OCI-LY7 (cell line): ENCODE measurements at regions of chr7 and their contacts with region 1.

Region 1: DNA sequence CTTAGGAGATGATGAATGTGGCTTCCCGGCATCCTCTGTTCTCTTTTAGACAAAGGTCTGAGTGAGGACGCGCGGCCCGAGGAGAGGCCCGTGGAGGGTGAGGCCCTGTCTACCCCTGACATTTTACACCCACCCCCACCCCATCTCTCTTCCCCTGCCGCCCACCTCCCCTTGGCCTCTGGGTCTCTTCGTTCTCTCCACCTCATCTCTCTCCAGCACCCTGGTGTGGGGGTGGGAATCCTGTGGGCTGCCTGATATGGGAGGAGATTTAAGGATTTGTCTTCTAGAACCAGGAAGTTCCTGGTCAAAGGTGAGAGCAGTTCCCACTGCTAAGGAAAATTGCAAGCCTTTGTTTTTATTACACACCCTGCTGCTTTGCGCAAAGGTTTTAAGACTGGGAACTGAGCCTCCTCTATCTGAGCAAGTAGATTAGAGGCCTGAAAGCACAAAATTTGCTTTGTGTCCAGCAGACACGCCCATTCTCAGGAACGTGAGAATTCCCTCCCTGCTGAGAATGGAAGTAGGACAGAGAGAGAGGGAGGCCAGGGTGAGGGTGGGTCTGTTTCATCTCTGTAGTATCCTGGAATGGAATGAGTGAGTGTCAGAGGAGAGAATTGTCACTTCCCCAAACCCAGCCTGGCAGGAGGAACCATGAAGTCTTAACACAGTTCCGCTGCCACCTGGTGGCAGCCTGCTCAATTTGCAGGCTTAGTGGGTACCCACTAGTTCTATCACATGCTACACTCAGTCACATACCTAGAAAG is 91.2 kb downstream of the GTF2IRD1 start:
- DNase-seq: peak; percentile 68
- H3K4me3 ChIP-seq: no peak overlapping the region
- H3K27ac ChIP-seq: no peak overlapping the region
- H3K4me1 ChIP-seq: no peaks in the 10 kb centered on the region
- CTCF ChIP-seq: peak; percentile 77

Region 2: DNA sequence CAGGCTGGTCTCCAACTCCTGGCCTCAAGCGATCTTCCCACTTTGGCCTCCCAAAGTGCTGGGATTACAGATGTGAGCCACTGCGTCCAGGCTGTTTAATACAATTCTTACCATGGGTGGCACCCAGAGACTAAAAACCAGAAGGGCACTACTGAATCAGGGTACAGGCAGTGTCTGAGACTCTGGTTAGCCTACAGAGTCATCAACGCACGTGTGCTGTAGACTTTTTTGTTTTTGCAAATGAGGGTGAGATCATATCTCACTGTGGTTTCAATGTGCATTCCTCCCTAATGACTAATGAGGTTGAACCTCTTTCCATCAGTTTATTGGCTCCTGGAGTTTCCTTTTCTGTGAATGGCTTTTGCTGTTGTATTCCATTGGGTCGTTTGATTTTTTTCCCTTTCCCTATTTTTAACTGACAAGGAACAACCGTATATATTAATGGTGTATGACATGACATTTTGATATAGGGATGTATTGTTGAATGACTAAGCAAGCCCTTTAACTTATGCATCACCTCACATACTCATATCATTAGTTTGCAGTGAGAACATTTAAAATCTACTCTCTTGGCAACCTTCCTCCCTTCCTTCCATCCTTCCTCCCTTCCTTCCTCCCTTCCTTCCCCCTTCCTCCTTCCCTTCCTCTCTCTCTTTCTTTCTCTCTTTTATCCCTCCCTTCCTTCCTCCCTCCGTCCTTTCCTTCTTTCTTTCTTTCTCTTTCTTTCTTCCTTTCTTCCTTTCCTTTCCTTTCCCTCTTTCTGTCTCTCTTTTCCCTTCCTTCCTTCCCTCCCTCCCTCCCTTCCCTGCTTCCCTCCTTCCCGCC is 693.3 kb before region 1 on chr7:
- CTCF ChIA-PET with region 1: no interaction called
- POLR2A ChIA-PET with region 1: no interaction called
- intact Hi-C with region 1: no loop called
- DNase-seq: no peak
- H3K4me3 ChIP-seq: no peak overlapping the region
- H3K27ac ChIP-seq: no peak overlapping the region
- H3K4me1 ChIP-seq: no peaks in the 10 kb centered on the region
- CTCF ChIP-seq: no peak

Region 3: DNA sequence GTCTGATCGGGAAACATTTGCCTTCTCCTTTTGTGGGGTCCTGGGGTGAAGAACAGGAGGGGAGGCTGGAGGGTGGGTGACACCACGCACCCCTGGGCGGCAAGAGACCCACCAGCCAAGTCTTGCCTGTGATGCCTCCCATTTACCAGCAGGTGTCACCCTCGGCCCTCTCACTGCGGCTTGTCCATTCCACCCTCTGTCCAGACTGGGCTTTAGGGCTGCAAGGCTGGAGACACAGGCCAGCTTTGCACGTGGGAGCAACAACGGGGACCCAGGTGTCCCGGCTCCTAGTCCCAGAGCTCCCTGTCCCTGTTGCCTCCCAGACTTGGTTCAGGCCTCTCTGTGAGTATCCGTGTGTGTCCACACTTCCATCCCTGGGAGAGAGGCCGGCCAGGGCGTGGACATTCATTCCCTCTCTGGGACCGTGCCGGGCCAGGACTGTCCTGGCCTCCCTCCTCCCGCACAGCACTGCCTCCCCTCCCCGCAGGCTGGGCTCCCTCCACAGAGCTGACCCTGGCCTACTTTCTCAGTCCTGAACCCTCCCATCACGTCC is 127.4 kb before region 1 on chr7:
- CTCF ChIA-PET with region 1: no interaction called
- POLR2A ChIA-PET with region 1: no interaction called
- intact Hi-C with region 1: loop called (anchors 1 kb)
- DNase-seq: peak; percentile 62
- H3K4me3 ChIP-seq: no peak overlapping the region
- H3K27ac ChIP-seq: no peak overlapping the region
- H3K4me1 ChIP-seq: no peaks in the 10 kb centered on the region
- CTCF ChIP-seq: peak; percentile 95

Region 4: GRCh38 chr7:74449809-74450397 is 95.0 kb before region 1 on chr7:
- CTCF ChIA-PET with region 1: no interaction called
- POLR2A ChIA-PET with region 1: no interaction called
- intact Hi-C with region 1: loop called (anchors 1 kb)
- DNase-seq: peak; percentile 76
- H3K4me3 ChIP-seq: no peak overlapping the region
- H3K27ac ChIP-seq: no peak overlapping the region
- H3K4me1 ChIP-seq: no peaks in the 10 kb centered on the region
- CTCF ChIP-seq: peak; percentile 86

Region 5: GRCh38 chr7:74575138-74575727 is 30.3 kb after region 1 on chr7:
- CTCF ChIA-PET with region 1: no interaction called
- POLR2A ChIA-PET with region 1: no interaction called
- intact Hi-C with region 1: no loop called
- DNase-seq: no peak
- H3K4me3 ChIP-seq: no peak overlapping the region
- H3K27ac ChIP-seq: no peak overlapping the region
- H3K4me1 ChIP-seq: peaks cover 8% of the 10 kb centered on the region
- CTCF ChIP-seq: no peak